ENCODE measurements at regions of chr4 and their contacts with region 1.

Region 1: GRCh38 chr4:26404743-26405206 is 84.0 kb downstream of the RBPJ start:
- DNase-seq: no peak
- ATAC-seq: no peak
- H3K4me3 ChIP-seq: no peak overlapping the region
- H3K27ac ChIP-seq: no peak overlapping the region
- H3K4me1 ChIP-seq: no peaks in the 10 kb centered on the region
- H3K27me3 ChIP-seq: no peaks in the 10 kb centered on the region
- CTCF ChIP-seq: no peak

Region 2: GRCh38 chr4:26330186-26330787 is 74.5 kb before region 1 on chr4:
- intact Hi-C with region 1: loop called (anchors 10 kb)
- DNase-seq: no peak
- ATAC-seq: peak; percentile 89
- H3K4me3 ChIP-seq: no peak overlapping the region
- H3K27ac ChIP-seq: no peak overlapping the region
- H3K4me1 ChIP-seq: peaks cover 15% of the 10 kb centered on the region
- H3K27me3 ChIP-seq: no peaks in the 10 kb centered on the region
- CTCF ChIP-seq: peak; percentile 77